GM10248 (cell line): ENCODE measurements at regions of chr4 and their contacts with region 1.

Region 1: GRCh38 chr4:47122592-47123291 is 91.4 kb downstream of the GABRB1 start:
- DNase-seq: peak; percentile 57
- CTCF ChIP-seq: peak; percentile 93

Region 2: DNA sequence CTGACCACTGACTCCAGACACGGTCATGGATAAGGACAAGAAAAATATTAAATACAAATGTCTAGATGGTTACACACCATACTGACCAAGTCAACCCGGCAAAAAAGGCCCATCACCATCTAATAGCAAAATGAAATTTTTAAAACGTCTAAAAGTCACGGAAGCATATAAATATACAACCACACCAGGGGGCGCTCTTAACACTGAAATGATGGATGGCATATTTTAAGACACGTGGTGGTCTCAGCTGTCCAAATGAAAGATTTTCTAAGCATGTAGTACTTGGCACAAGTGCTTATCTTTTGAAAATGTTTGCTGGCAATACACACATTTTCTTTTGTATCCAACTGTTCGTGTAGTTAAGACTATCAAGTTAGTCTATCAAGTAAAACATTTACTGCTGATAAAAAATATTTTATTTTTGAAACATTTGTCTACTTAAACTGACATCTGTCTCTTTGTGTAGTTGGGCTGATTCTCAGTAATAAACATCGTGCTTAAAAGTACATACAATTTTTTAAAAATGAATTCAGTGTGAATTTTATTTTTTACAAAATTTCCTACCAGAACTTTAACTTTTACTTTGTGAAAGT is 278.3 kb before region 1 on chr4:
- CTCF ChIA-PET with region 1: interaction called, 24 read pairs
- POLR2A ChIA-PET with region 1: no interaction called
- DNase-seq: peak; percentile 26
- CTCF ChIP-seq: peak; percentile 68

Region 3: GRCh38 chr4:46931981-46932380 is 190.8 kb before region 1 on chr4:
- CTCF ChIA-PET with region 1: interaction called, 12 read pairs
- POLR2A ChIA-PET with region 1: no interaction called
- DNase-seq: peak; percentile 15
- CTCF ChIP-seq: peak; percentile 64

Region 4: DNA sequence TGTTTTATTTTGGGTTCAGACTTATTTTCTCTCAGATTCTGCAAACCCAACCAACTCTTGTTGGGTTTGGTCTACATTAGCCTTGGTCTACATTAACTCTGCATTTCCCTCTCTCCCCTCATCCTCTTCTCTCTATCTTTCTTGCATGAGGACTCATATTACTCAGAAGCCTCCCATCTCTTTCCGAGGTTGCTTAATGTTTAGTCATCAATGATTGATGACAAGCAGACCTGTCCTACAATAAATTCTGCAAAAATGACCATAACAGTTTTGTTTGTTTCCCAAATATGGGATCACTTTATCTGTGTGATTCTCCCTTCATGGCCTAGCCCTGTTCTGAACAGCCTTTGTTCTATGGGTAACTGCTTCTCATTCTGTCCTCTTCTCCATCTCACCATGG is 16.2 kb before region 1 on chr4:
- CTCF ChIA-PET with region 1: interaction called, 76 read pairs
- POLR2A ChIA-PET with region 1: no interaction called
- DNase-seq: no peak
- CTCF ChIP-seq: no peak

Region 5: GRCh38 chr4:47135210-47135609 is 12.5 kb after region 1 on chr4:
- CTCF ChIA-PET with region 1: interaction called, 18 read pairs
- POLR2A ChIA-PET with region 1: no interaction called
- DNase-seq: no peak
- CTCF ChIP-seq: no peak

Region 6: GRCh38 chr4:47145630-47146029 is 22.9 kb after region 1 on chr4:
- CTCF ChIA-PET with region 1: interaction called, 16 read pairs
- POLR2A ChIA-PET with region 1: no interaction called
- DNase-seq: peak; percentile 39
- CTCF ChIP-seq: no peak

Region 7: DNA sequence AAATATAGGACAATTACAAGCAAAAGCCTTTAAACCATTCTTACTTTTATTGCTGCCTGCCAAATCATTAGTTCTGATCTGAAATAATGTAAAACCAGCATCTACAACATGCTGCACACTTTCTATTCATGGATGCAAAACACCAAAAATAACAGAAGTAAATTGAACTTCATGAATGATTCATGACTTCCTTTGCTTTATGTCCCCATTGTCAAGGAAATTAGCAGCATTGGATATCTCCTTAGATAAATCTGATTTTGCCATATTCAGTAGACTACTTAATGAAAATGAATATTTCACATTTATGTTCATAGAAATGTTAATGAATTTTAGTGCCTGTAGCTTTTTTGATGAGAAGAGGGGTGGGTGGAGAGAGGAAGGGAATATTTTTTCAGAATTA is 208.1 kb after region 1 on chr4:
- CTCF ChIA-PET with region 1: no interaction called
- POLR2A ChIA-PET with region 1: no interaction called
- DNase-seq: no peak
- CTCF ChIP-seq: no peak

Region 8: GRCh38 chr4:47383829-47384427 is 261.2 kb after region 1 on chr4:
- CTCF ChIA-PET with region 1: interaction called, 11 read pairs
- POLR2A ChIA-PET with region 1: no interaction called
- DNase-seq: peak; percentile 22
- CTCF ChIP-seq: peak; percentile 51